Sigmoid colon (tissue), 7 donors: ENCODE measurements at regions of chr5 and their contacts with region 1.

Region 1: GRCh38 chr5:10249948-10250803 is at the start of gene CCT5:
- DNase-seq: peak; percentile 98
- H3K4me3 ChIP-seq: peak within 1 kb of the TSS; percentile 73 to 93 (median 84)
- H3K27ac ChIP-seq: peak within 1 kb of the TSS; percentile 93 to 96 (median 94)
- H3K4me1 ChIP-seq: peaks cover 0 to 31% (median 23%) of the 10 kb centered on the region in 4 donors
- H3K27me3 ChIP-seq: no peaks in the 10 kb centered on the region
- CTCF ChIP-seq: no peak
- EP300 ChIP-seq: peak in 1 of 4 donors; percentile 65
- POLR2A ChIP-seq: peak in 1 of 2 donors; percentile 62
- total RNA-seq, gene CCT5: 63.4 to 124 (median 107) TPM

Region 2: DNA sequence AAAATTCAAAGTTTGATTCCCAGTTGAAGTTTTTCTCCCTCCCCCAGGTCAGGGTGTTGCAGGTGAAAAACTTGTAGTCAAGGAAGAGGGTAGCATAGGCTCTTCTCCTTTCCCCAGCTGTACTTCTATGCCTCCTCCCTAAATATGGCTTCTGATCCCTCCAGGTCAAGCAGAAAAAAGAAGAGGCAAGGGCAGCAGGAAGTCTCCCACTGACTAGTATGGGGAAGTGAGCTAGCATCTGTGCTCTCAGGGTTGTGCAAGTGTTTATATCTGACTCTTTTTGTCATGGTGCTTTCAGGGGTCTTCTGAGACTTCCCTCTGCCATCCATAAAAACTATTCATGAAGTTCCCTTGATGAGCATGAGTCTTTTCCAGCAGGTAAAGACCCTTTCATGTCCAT is 76.5 kb before region 1 on chr5:
- intact Hi-C with region 1: no loop called
- DNase-seq: no peak
- H3K4me3 ChIP-seq: no peak overlapping the region
- H3K27ac ChIP-seq: no peak overlapping the region
- H3K4me1 ChIP-seq: no peaks in the 10 kb centered on the region
- H3K27me3 ChIP-seq: no peaks in the 10 kb centered on the region
- CTCF ChIP-seq: no peak
- EP300 ChIP-seq: no peak
- POLR2A ChIP-seq: no peak

Region 3: GRCh38 chr5:10301842-10302610 is 51.9 kb after region 1 on chr5:
- intact Hi-C with region 1: no loop called
- DNase-seq: peak; percentile 84
- H3K4me3 ChIP-seq: no peak overlapping the region
- H3K27ac ChIP-seq: peak overlapping the region in 2 of 4 donors; percentile 21 to 27
- H3K4me1 ChIP-seq: peaks cover 0 to 19% (median 12%) of the 10 kb centered on the region in 4 donors
- H3K27me3 ChIP-seq: no peaks in the 10 kb centered on the region
- CTCF ChIP-seq: no peak
- EP300 ChIP-seq: no peak
- POLR2A ChIP-seq: peak in 1 of 2 donors; percentile 28

Region 4: DNA sequence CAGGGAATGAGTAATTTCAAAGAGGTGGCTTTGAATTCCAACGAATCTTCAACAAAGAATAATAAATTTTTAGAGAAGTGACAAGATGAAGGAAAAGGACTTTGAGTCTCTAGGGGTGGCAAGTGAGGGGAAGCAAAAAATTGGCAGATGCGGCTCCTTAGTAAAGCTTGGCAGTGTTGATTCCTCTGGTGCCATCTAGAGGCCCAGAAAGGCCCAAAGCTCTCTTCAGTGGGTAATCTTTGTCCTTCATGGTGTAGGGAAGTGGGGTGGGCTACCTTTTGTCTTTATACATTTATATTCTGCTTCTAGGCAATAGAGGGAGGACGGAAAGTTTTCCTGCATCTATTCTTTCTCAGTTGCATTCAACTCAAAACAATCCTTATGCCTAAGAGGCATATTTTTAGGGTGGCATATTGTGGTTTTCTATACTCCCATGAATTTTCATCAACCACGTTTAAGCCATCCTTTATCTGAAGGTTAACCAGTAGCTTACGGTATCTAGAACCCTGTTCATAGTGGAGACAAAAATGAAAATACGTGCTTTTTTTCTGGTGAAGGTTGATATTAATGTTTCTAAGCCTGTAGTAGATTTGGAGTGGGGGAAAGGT is 174.1 kb after region 1 on chr5:
- intact Hi-C with region 1: no loop called
- DNase-seq: no peak
- H3K4me3 ChIP-seq: no peak overlapping the region
- H3K27ac ChIP-seq: no peak overlapping the region
- H3K4me1 ChIP-seq: peaks cover 0 to 14% (median 2%) of the 10 kb centered on the region in 4 donors
- H3K27me3 ChIP-seq: no peaks in the 10 kb centered on the region
- CTCF ChIP-seq: peak in 2 of 4 experiments; percentile 10 to 35
- EP300 ChIP-seq: no peak
- POLR2A ChIP-seq: no peak

Region 5: DNA sequence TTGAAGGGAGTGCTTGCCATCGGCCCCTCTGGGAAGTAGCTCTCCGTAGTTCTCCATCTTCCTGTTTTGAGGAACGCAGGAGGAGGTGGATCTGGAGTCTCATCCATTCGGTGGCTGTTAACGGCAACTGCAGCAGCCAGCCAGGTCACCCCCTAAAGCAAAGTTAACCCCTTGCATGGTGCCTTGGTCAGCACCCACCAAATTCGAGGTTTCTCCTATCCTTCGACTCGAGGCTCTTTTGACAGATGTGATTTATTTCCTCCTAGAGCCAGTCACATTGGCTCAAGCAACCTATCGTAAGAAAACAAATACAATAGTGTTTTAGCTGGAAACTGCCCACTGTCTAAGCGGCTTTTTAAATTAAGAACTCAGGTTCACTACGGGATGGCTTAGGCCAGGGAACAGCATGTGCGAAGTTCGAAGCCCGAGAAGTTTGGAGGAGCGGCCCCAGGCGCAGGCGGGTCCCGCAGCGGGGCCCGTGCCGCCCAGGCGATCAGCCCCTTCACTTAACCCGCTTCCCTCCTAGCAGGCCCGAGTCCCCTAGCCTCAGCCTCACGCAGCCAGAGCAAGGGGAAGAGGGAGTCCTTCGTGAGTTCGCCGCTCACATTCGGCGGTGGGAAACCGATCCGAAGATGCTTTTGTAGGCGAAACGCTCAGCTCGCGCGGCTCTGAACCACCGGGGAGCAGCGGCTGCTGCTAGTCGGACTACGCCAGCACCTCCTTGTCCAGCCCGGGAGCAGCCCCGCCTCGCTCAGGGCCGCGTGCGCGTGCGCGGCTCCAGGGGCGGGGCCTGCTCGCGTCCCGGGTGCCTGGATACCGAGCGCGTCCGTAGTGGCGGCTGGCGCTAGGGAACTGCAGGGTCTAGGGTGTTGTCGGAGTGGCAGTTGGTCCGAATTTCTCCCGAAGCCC is 191.2 kb after region 1 on chr5 and contains the start of gene ROPN1L:
- intact Hi-C with region 1: loop called (anchors 5 kb)
- DNase-seq: peak; percentile 91
- H3K4me3 ChIP-seq: peak within 1 kb of the TSS; percentile 39 to 64 (median 63)
- H3K27ac ChIP-seq: peak within 1 kb of the TSS; percentile 77 to 83 (median 78)
- H3K4me1 ChIP-seq: peaks cover 0 to 21% (median 18%) of the 10 kb centered on the region in 4 donors
- H3K27me3 ChIP-seq: no peaks in the 10 kb centered on the region
- CTCF ChIP-seq: no peak
- EP300 ChIP-seq: no peak
- POLR2A ChIP-seq: no peak
- total RNA-seq, gene ROPN1L: 0.68 to 1.9 TPM in 2 of 4 donors, not detected in the others

Region 6: GRCh38 chr5:11166923-11167322 is 916.7 kb after region 1 on chr5:
- intact Hi-C with region 1: no loop called
- DNase-seq: no peak
- H3K4me3 ChIP-seq: no peak overlapping the region
- H3K27ac ChIP-seq: no peak overlapping the region
- H3K4me1 ChIP-seq: no peaks in the 10 kb centered on the region
- H3K27me3 ChIP-seq: no peaks in the 10 kb centered on the region
- CTCF ChIP-seq: no peak
- EP300 ChIP-seq: no peak
- POLR2A ChIP-seq: no peak